Activated B cell treated with CpG ODN at 0.5 μM for 24 hours (primary cell): ENCODE measurements at regions of chr18 and their contacts with region 1.

Region 1: GRCh38 chr18:65146482-65147021 is 604.3 kb upstream of the CDH7 start:
- DNase-seq: no peak
- ATAC-seq: no peak
- H3K4me3 Mint-ChIP-seq: no peak overlapping the region
- H3K27ac Mint-ChIP-seq: no peak overlapping the region
- H3K4me1 Mint-ChIP-seq: no peaks in the 10 kb centered on the region
- H3K27me3 Mint-ChIP-seq: no peaks in the 10 kb centered on the region
- CTCF ChIP-seq: no peak

Region 2: GRCh38 chr18:65082907-65083306 is 63.6 kb before region 1 on chr18:
- CTCF ChIA-PET with region 1: no interaction called
- POLR2A ChIA-PET with region 1: no interaction called
- intact Hi-C with region 1: no loop called
- DNase-seq: no peak
- ATAC-seq: no peak
- H3K4me3 Mint-ChIP-seq: no peak overlapping the region
- H3K27ac Mint-ChIP-seq: no peak overlapping the region
- H3K4me1 Mint-ChIP-seq: no peaks in the 10 kb centered on the region
- H3K27me3 Mint-ChIP-seq: no peaks in the 10 kb centered on the region
- CTCF ChIP-seq: no peak

Region 3: GRCh38 chr18:65215865-65216466 is 69.4 kb after region 1 on chr18:
- CTCF ChIA-PET with region 1: no interaction called
- POLR2A ChIA-PET with region 1: no interaction called
- intact Hi-C with region 1: loop called (anchors 10 kb)
- DNase-seq: no peak
- ATAC-seq: no peak
- H3K4me3 Mint-ChIP-seq: no peak overlapping the region
- H3K27ac Mint-ChIP-seq: no peak overlapping the region
- H3K4me1 Mint-ChIP-seq: no peaks in the 10 kb centered on the region
- H3K27me3 Mint-ChIP-seq: no peaks in the 10 kb centered on the region
- CTCF ChIP-seq: no peak